CD4-positive, alpha-beta memory T cell (primary cell): ENCODE measurements at regions of chr10 and their contacts with region 1.

Region 1: GRCh38 chr10:29658984-29659965 is 24.5 kb upstream of the SVIL start:
- DNase-seq: peak; percentile 76 to 95 (median 78)
- H3K4me3 ChIP-seq: peak overlapping the region in 1 of 2 donors; percentile 5
- H3K4me3 Mint-ChIP-seq: peak overlapping the region; percentile 60 to 80 (median 69)
- H3K27ac ChIP-seq: peak overlapping the region; percentile 66
- H3K27ac Mint-ChIP-seq: peak overlapping the region; percentile 88 to 96 (median 94)
- H3K4me1 ChIP-seq: peaks cover 33% of the 10 kb centered on the region
- H3K4me1 Mint-ChIP-seq: peaks cover 28 to 53% (median 34%) of the 10 kb centered on the region in 4 donors
- H3K27me3 ChIP-seq: no peaks in the 10 kb centered on the region
- H3K27me3 Mint-ChIP-seq: no peaks in the 10 kb centered on the region

Region 2: DNA sequence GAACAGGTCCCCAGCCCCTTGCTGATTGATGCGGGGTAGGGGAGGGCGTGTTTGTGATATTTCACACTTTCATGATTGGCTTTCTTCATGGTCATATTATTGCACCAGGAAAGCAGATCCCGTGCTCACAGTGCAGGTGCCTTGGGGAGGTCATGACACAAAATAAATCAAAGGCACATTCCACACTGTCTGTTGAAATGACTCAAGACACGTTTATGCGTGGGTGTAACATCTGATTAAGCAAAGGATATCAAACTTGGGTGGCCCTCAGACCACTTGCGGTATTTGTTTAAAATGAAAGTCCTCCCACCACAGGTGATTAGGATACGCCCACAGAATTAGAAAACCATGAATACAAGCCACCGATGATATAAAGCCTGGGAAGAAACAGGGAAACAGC is 75.6 kb before region 1 on chr10:
- CTCF ChIA-PET with region 1: no interaction called
- POLR2A ChIA-PET with region 1: no interaction called
- intact Hi-C with region 1: no loop called
- DNase-seq: no peak
- H3K4me3 ChIP-seq: no peak overlapping the region
- H3K4me3 Mint-ChIP-seq: peak overlapping the region in 2 of 8 donors; percentile 10 to 42
- H3K27ac ChIP-seq: no peak overlapping the region
- H3K27ac Mint-ChIP-seq: no peak overlapping the region
- H3K4me1 ChIP-seq: no peaks in the 10 kb centered on the region
- H3K4me1 Mint-ChIP-seq: peaks cover 6 to 32% (median 11%) of the 10 kb centered on the region in 4 donors
- H3K27me3 ChIP-seq: no peaks in the 10 kb centered on the region
- H3K27me3 Mint-ChIP-seq: no peaks in the 10 kb centered on the region

Region 3: DNA sequence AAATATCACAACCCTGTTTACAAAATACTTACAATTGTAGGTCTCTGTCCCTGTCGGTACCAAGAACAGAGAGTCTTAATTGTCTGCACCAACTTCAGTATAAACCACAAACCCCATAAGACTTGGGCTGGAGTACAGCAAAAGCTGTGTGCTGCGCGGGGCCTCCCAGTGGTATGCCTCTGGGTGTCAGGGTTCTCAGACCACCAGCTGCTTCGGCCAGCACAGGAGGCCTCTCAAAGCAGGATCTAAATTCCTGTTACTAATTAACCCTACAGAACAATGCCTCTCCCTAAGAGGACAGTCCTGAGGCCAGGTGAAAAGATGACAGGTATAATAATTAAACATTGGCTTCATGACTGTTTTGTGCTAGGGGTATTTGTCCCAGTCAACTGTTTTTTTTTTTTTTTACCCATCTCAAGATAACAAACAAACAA is 23.5 kb before region 1 on chr10:
- CTCF ChIA-PET with region 1: interaction called, 6 read pairs
- POLR2A ChIA-PET with region 1: interaction called, 14 read pairs
- intact Hi-C with region 1: loop called (anchors 1 kb)
- DNase-seq: peak; percentile 43 to 60 (median 55)
- H3K4me3 ChIP-seq: peak overlapping the region in 1 of 2 donors; percentile 11
- H3K4me3 Mint-ChIP-seq: peak overlapping the region; percentile 68 to 83 (median 74)
- H3K27ac ChIP-seq: peak overlapping the region; percentile 67
- H3K27ac Mint-ChIP-seq: peak overlapping the region; percentile 82 to 97 (median 96)
- H3K4me1 ChIP-seq: peaks cover 46% of the 10 kb centered on the region
- H3K4me1 Mint-ChIP-seq: peaks cover 33 to 66% (median 54%) of the 10 kb centered on the region in 4 donors
- H3K27me3 ChIP-seq: no peaks in the 10 kb centered on the region
- H3K27me3 Mint-ChIP-seq: no peaks in the 10 kb centered on the region

Region 4: DNA sequence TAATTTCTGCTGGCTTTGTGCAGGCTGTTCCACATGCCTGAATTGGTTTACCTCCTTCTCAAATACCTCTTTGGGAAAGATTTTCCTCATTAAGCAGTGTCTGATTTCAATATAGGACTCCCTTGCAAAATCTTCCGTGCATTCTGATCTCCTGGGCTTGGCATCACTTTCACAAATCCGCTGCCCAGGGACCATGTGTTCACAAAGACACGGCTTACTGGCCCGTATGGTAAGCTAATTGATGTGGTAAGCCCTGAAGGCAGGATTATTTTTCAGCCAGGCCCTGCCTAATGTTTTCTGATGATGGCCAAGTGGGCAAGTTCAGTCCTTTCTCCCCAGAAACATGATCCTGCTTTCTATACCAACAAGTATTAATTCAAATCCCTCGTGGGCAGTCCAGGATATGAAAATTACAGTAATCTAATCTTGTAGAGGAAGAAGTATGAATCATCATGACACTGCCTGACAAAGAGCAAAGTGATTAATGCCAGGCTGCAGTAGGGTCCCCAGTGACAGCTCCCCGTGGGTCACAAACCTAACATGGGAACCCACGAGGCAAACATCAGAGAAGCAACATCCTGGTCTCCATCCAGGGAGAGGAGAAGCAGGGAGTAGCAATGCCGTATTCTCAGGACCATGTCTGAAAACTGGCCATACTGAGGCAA is 12.9 kb before region 1 on chr10:
- CTCF ChIA-PET with region 1: interaction called, 11 read pairs
- POLR2A ChIA-PET with region 1: interaction called, 14 read pairs
- intact Hi-C with region 1: loop called (anchors 1 kb)
- DNase-seq: peak in 1 of 5 donors; percentile 22
- H3K4me3 ChIP-seq: no peak overlapping the region
- H3K4me3 Mint-ChIP-seq: peak overlapping the region in 7 of 8 donors; percentile 37 to 84 (median 67)
- H3K27ac ChIP-seq: peak overlapping the region; percentile 22
- H3K27ac Mint-ChIP-seq: peak overlapping the region in 6 of 7 donors; percentile 76 to 96 (median 92)
- H3K4me1 ChIP-seq: peaks cover 36% of the 10 kb centered on the region
- H3K4me1 Mint-ChIP-seq: peaks cover 30 to 74% (median 51%) of the 10 kb centered on the region in 4 donors
- H3K27me3 ChIP-seq: no peaks in the 10 kb centered on the region
- H3K27me3 Mint-ChIP-seq: no peaks in the 10 kb centered on the region

Region 5: DNA sequence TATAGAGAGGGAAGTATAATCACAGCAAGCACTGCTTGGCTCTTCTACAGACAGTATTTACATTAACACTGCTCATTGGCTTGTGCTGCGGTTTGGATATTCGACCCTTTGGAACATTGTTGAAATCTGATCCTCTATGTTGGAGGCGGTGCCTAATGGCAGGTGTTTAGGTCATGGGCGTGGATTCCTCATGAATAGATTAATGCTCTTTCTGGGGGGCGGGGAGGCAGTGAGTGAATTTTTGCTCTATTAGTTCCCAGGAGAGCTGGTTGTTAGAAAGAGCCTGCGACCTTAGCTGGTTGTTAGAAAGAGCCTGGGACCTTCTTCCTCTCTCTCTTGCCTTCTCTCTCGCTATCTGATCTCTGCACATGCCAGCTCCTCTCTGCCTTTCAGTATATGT is 52.8 kb after region 1 on chr10:
- CTCF ChIA-PET with region 1: no interaction called
- POLR2A ChIA-PET with region 1: no interaction called
- intact Hi-C with region 1: no loop called
- DNase-seq: no peak
- H3K4me3 ChIP-seq: no peak overlapping the region
- H3K4me3 Mint-ChIP-seq: no peak overlapping the region
- H3K27ac ChIP-seq: no peak overlapping the region
- H3K27ac Mint-ChIP-seq: no peak overlapping the region
- H3K4me1 ChIP-seq: peaks cover 7% of the 10 kb centered on the region
- H3K4me1 Mint-ChIP-seq: peaks cover 19 to 65% (median 22%) of the 10 kb centered on the region in 4 donors
- H3K27me3 ChIP-seq: no peaks in the 10 kb centered on the region
- H3K27me3 Mint-ChIP-seq: no peaks in the 10 kb centered on the region